ENCODE measurements at regions of chr9 and their contacts with region 1.

Region 1: DNA sequence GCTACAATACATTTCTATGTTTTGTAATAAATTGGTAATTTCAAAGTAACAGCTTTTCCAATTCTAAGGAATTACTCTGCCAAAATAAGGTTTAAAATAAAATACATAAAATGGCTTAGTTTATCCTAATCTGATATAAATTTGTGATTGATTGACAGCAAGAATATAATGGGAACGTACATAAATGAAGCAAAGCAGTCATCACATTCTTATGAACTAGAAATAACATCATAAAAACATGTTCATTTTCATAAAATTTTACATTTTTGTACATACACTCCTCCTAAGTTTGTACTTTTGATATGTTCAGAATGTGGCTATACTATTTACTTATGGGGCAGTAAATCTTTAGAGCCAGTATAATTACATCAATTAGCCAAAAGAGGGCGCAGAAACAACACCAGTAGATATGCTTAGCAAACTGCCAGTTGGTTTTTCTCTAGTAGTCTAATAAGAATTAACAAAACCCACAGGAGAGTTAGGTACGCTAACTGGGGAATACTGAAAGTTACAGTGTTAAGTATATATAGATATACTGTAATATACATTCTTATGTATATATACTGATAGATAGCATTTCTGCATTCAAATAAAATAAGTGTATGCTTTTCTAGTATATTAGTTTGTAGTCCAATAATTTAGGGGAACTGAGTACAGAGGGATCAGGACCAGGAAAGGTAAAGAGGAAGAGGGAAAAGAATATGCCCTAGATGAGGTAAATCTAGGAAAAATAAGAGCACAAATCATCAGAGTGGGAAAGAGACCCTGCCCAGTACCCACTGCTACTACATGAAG is 76.8 kb downstream of the ZDHHC21 start:
- DNase-seq: no peak
- H3K4me3 ChIP-seq: no peak overlapping the region
- H3K27ac ChIP-seq: no peak overlapping the region
- H3K4me1 ChIP-seq: no peaks in the 10 kb centered on the region
- H3K27me3 ChIP-seq: no peaks in the 10 kb centered on the region
- CTCF ChIP-seq: peak; percentile 75

Region 2: GRCh38 chr9:14768405-14769229 is 152.2 kb after region 1 on chr9:
- intact Hi-C with region 1: loop called (anchors 5 kb)
- DNase-seq: no peak
- H3K4me3 ChIP-seq: peak overlapping the region; percentile 32
- H3K27ac ChIP-seq: no peak overlapping the region
- H3K4me1 ChIP-seq: peaks cover 7% of the 10 kb centered on the region
- H3K27me3 ChIP-seq: peaks cover 9% of the 10 kb centered on the region
- CTCF ChIP-seq: peak; percentile 84

Measured in left ventricle myocardium inferior (tissue), 1 donor.